Psoas muscle (tissue), 8 donors: ENCODE measurements at regions of chr18 and their contacts with region 1.

Region 1: GRCh38 chr18:59358712-59359575 is at the start of gene LMAN1:
- DNase-seq: peak; percentile 97
- ATAC-seq: peak; percentile 97 to 100 (median 98)
- H3K4me3 ChIP-seq: peak within 1 kb of the TSS; percentile 80
- H3K27ac ChIP-seq: peak within 1 kb of the TSS; percentile 94
- H3K4me1 ChIP-seq: peaks cover 24% of the 10 kb centered on the region
- H3K27me3 ChIP-seq: no peaks in the 10 kb centered on the region
- CTCF ChIP-seq: no peak
- total RNA-seq, gene LMAN1: 31.3 to 64.0 (median 41.9) TPM

Region 2: GRCh38 chr18:59387687-59388565 is 29.0 kb after region 1 on chr18:
- intact Hi-C with region 1: loop called in 1 of 2 experiments (anchors 2 kb)
- DNase-seq: no peak
- ATAC-seq: no peak
- H3K4me3 ChIP-seq: peak overlapping the region; percentile 56
- H3K27ac ChIP-seq: peak overlapping the region; percentile 77
- H3K4me1 ChIP-seq: peaks cover 23% of the 10 kb centered on the region
- H3K27me3 ChIP-seq: no peaks in the 10 kb centered on the region
- CTCF ChIP-seq: no peak

Region 3: DNA sequence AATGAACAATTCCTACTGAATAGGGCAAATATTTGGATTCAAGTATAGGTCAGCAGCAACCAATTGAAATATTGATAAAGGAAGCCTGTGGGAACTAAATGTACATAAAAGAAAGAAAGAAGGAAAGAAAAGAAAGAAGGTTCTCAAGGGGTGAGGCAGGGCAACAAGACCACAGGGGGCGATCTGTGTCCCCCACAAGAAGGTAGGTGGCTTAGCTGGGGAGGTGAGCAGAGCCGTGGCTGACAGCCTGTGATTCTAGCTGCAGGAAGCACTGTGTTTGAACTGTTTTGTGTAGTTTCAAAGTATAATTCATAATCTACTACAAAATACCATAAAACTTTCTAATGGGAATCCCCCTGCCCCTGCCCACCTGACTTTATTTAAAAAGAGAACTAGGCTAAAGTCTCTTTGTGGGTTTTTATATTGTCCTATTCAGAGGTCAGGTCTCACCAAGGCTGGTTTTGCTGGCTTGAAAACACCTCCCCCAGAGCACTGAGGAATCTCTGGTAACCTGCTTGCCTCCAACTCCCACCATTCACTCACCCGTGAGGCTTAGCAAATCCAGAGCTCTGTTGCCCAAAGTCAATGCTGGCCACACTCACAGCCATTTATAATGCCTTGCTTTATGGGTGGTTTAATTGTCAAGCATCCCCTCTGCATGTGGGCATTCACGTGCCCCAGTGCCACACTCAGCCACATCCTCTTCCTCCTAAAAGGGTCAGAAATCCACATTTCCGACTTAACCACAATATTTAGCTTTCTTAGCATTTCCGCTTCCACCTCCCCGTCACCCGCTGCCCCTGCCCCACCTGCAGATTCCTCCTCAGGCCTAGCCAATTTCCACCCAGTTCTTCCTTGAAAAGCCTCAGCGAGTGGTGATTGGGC is 36.5 kb after region 1 on chr18:
- intact Hi-C with region 1: loop called in 1 of 2 experiments (anchors 5 kb)
- DNase-seq: no peak
- ATAC-seq: no peak
- H3K4me3 ChIP-seq: no peak overlapping the region
- H3K27ac ChIP-seq: no peak overlapping the region
- H3K4me1 ChIP-seq: peaks cover 4% of the 10 kb centered on the region
- H3K27me3 ChIP-seq: no peaks in the 10 kb centered on the region
- CTCF ChIP-seq: no peak